B cell (primary cell): ENCODE measurements at regions of chr3 and their contacts with region 1.

Region 1: DNA sequence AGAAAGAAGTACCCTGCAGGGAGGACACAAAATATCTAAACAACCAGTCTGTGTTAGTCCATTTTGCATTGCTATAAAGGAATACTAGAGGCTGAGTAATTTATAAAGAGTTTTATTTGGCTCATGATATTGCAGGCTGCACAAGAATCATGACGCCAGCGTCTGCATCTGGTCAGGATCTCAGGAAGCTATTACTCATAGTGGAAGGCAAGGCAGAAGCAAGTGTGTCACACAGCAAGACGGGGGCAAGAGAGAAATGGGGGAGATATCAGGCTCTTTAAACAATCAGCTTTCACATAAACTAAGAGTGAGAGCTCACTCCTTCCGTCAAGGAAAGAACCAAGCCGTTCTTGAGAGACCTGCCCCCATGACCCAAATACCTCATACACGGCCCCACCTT is 614.8 kb downstream of the ZIC1 start:
- DNase-seq: no peak
- ATAC-seq: no peak
- H3K4me3 ChIP-seq: no peak overlapping the region
- H3K4me3 Mint-ChIP-seq: no peak overlapping the region
- H3K27ac ChIP-seq: no peak overlapping the region
- H3K27ac Mint-ChIP-seq: no peak overlapping the region
- H3K4me1 ChIP-seq: no peaks in the 10 kb centered on the region
- H3K4me1 Mint-ChIP-seq: no peaks in the 10 kb centered on the region
- H3K27me3 ChIP-seq: no peaks in the 10 kb centered on the region
- H3K27me3 Mint-ChIP-seq: no peaks in the 10 kb centered on the region
- CTCF ChIP-seq: no peak

Region 2: GRCh38 chr3:147956615-147957014 is 67.4 kb before region 1 on chr3:
- CTCF ChIA-PET with region 1: no interaction called
- POLR2A ChIA-PET with region 1: no interaction called
- intact Hi-C with region 1: loop called (anchors 10 kb)
- DNase-seq: no peak
- ATAC-seq: no peak
- H3K4me3 ChIP-seq: no peak overlapping the region
- H3K4me3 Mint-ChIP-seq: no peak overlapping the region
- H3K27ac ChIP-seq: no peak overlapping the region
- H3K27ac Mint-ChIP-seq: no peak overlapping the region
- H3K4me1 ChIP-seq: no peaks in the 10 kb centered on the region
- H3K4me1 Mint-ChIP-seq: no peaks in the 10 kb centered on the region
- H3K27me3 ChIP-seq: no peaks in the 10 kb centered on the region
- H3K27me3 Mint-ChIP-seq: no peaks in the 10 kb centered on the region
- CTCF ChIP-seq: no peak